Calu3 (cell line): ENCODE measurements at regions of chr18 and their contacts with region 1.

Region 1: GRCh38 chr18:45920367-45920766 is 46.8 kb downstream of the EPG5 start:
- DNase-seq: peak; percentile 31
- H3K4me3 Mint-ChIP-seq: no peak overlapping the region
- H3K27ac Mint-ChIP-seq: no peak overlapping the region
- H3K4me1 Mint-ChIP-seq: peaks cover 11% of the 10 kb centered on the region
- H3K27me3 Mint-ChIP-seq: no peaks in the 10 kb centered on the region
- CTCF ChIP-seq: no peak

Region 2: DNA sequence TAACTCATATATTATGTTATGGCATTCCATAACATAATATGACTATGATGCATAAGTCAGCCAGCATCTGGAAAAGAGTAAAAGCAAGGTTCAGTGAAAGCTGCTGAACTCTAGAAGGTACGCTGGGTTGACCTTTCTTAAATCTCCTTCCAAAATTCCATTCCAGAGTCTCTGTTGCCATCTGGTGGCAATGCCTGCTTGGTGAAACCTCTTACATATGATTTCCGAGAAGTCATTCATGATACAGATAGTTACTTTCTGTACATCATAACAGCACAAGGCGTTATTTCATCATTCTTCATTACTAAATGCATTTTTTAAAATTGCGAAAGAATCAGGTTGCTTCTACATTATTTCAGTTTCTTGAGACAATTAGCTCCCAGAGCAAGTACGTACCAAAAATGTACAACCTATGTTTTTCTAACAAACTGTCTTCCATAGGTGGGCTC is 53.7 kb after region 1 on chr18:
- CTCF ChIA-PET with region 1: interaction called, 5 read pairs
- intact Hi-C with region 1: loop called (anchors 5 kb)
- DNase-seq: peak; percentile 62
- H3K4me3 Mint-ChIP-seq: no peak overlapping the region
- H3K27ac Mint-ChIP-seq: no peak overlapping the region
- H3K4me1 Mint-ChIP-seq: peaks cover 21% of the 10 kb centered on the region
- H3K27me3 Mint-ChIP-seq: no peaks in the 10 kb centered on the region
- CTCF ChIP-seq: peak; percentile 68